ENCODE measurements at regions of chr19 and their contacts with region 1.

Region 1: GRCh38 chr19:41872775-41873647 is 4.1 kb upstream of the CD79A start:
- DNase-seq: peak; percentile 81
- ATAC-seq: no peak
- H3K4me3 Mint-ChIP-seq: no peak overlapping the region
- H3K27ac Mint-ChIP-seq: peak overlapping the region; percentile 93
- H3K4me1 Mint-ChIP-seq: peaks cover 85% of the 10 kb centered on the region
- H3K27me3 Mint-ChIP-seq: no peaks in the 10 kb centered on the region

Region 2: GRCh38 chr19:41883821-41884733 is 11.1 kb after region 1 on chr19:
- CTCF ChIA-PET with region 1: interaction called, 260 read pairs
- DNase-seq: peak; percentile 97
- ATAC-seq: peak; percentile 81
- H3K4me3 Mint-ChIP-seq: peak overlapping the region; percentile 82
- H3K27ac Mint-ChIP-seq: peak overlapping the region; percentile 94
- H3K4me1 Mint-ChIP-seq: peaks cover 41% of the 10 kb centered on the region
- H3K27me3 Mint-ChIP-seq: no peaks in the 10 kb centered on the region

Region 3: DNA sequence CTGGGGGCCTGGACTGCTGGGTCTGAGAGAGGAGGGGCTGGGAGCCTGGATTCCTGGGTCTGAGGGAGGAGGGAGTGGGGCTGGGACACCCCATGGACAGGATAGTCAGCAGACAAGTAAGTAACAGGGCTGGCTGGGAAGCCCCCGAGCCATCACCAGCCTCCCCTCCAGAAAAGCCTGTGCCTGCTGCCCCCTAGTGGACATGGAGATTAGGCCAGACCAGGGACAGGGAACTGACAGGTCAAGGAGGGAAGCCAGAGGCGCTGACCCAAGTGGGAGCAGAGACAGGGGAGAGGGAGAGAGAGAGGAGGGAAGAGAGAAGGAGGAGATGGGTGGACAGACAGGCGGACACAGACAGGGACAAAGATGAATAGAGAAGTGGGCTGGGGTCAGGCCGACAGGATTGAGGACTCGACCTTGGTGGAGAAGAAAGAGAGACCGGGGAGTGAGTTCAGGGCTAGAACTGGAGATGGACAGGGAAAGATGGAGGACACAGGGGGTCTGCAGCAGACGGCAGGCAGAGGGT is 61.9 kb after region 1 on chr19:
- CTCF ChIA-PET with region 1: interaction called, 16 read pairs
- DNase-seq: peak; percentile 84
- ATAC-seq: peak; percentile 79
- H3K4me3 Mint-ChIP-seq: no peak overlapping the region
- H3K27ac Mint-ChIP-seq: peak overlapping the region; percentile 44
- H3K4me1 Mint-ChIP-seq: peaks cover 33% of the 10 kb centered on the region
- H3K27me3 Mint-ChIP-seq: peaks cover 42% of the 10 kb centered on the region

Region 4: DNA sequence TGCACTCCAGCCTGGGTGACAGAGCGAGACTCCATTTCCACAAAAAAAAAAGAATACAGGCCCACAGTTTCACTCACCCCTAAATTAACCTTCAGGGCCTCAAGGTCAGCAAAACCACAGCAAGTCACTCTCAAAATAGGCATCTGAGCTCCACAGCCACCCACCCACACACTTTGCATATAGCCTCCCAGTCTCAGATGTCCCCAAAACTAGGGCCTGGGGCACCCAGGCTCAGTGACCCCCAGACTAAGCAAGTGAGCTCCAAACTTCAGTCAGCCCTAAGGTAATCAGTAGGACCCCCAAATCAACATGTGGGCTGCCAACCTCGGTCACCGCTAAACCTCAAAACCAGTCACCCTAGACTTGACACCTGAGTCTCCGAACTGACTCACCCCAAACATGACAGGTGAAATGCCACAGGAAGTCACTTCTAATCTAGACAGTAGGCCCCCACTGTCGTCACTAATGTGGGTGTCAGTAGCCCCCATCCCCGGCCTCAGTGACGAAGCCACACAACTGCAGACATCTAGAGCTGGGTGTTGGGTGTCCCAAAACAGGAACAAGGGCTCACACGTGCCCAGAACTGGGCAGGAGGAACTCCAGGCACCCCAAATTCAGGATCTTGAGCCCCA is 72.2 kb after region 1 on chr19:
- CTCF ChIA-PET with region 1: interaction called, 88 read pairs
- DNase-seq: peak; percentile 97
- ATAC-seq: peak; percentile 88
- H3K4me3 Mint-ChIP-seq: peak overlapping the region; percentile 43
- H3K27ac Mint-ChIP-seq: peak overlapping the region; percentile 91
- H3K4me1 Mint-ChIP-seq: peaks cover 52% of the 10 kb centered on the region
- H3K27me3 Mint-ChIP-seq: peaks cover 17% of the 10 kb centered on the region

Region 5: DNA sequence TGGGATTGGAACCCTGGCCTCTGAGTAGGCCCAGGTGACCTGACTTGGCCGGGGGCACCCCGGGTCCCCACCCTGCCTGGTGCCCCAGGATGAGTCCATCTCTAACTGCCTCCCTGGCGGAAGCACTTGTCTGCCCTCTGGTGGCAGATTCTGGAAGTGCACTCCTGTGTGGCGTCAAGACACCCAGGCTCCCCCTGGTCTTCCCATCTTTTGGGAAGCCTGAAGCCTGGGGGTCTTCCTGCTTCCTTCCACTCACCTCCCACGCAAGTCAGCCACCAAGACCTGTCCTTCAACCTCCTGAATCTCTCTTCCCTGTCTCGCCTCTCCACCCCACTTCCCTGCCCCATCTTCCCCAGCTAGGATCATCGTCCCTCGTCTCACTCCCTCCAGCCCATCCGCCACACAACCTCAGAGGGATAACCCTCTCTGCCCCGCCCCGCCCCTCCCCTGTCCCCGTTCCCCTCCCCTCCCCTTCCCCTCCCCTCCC is 78.7 kb after region 1 on chr19:
- CTCF ChIA-PET with region 1: interaction called, 88 read pairs
- DNase-seq: peak; percentile 92
- ATAC-seq: peak; percentile 89
- H3K4me3 Mint-ChIP-seq: no peak overlapping the region
- H3K27ac Mint-ChIP-seq: peak overlapping the region; percentile 21
- H3K4me1 Mint-ChIP-seq: peaks cover 21% of the 10 kb centered on the region
- H3K27me3 Mint-ChIP-seq: peaks cover 2% of the 10 kb centered on the region

Region 6: GRCh38 chr19:41959056-41960053 is 86.3 kb after region 1 on chr19 and contains the start of gene RABAC1:
- CTCF ChIA-PET with region 1: interaction called, 32 read pairs
- DNase-seq: peak; percentile 95
- ATAC-seq: peak; percentile 91
- H3K4me3 Mint-ChIP-seq: peak within 1 kb of the TSS; percentile 94
- H3K27ac Mint-ChIP-seq: peak within 1 kb of the TSS; percentile 87
- H3K4me1 Mint-ChIP-seq: peaks cover 19% of the 10 kb centered on the region
- H3K27me3 Mint-ChIP-seq: no peaks in the 10 kb centered on the region
- total RNA-seq, gene RABAC1: 81.3 to 93.9 TPM